CD8-positive, alpha-beta T cell (primary cell): ENCODE measurements at regions of chr20 and their contacts with region 1.

Region 1: GRCh38 chr20:41095110-41095969 is 42.0 kb upstream of the PLCG1 start:
- DNase-seq: peak; percentile 13 to 78 (median 59)
- ATAC-seq: peak; percentile 84
- H3K4me3 ChIP-seq: no peak overlapping the region
- H3K4me3 Mint-ChIP-seq: no peak overlapping the region
- H3K27ac ChIP-seq: no peak overlapping the region
- H3K27ac Mint-ChIP-seq: no peak overlapping the region
- H3K4me1 ChIP-seq: peaks cover 2% of the 10 kb centered on the region
- H3K4me1 Mint-ChIP-seq: peaks cover 3% of the 10 kb centered on the region
- H3K27me3 ChIP-seq: no peaks in the 10 kb centered on the region
- H3K27me3 Mint-ChIP-seq: no peaks in the 10 kb centered on the region
- CTCF ChIP-seq: peak; percentile 85

Region 2: DNA sequence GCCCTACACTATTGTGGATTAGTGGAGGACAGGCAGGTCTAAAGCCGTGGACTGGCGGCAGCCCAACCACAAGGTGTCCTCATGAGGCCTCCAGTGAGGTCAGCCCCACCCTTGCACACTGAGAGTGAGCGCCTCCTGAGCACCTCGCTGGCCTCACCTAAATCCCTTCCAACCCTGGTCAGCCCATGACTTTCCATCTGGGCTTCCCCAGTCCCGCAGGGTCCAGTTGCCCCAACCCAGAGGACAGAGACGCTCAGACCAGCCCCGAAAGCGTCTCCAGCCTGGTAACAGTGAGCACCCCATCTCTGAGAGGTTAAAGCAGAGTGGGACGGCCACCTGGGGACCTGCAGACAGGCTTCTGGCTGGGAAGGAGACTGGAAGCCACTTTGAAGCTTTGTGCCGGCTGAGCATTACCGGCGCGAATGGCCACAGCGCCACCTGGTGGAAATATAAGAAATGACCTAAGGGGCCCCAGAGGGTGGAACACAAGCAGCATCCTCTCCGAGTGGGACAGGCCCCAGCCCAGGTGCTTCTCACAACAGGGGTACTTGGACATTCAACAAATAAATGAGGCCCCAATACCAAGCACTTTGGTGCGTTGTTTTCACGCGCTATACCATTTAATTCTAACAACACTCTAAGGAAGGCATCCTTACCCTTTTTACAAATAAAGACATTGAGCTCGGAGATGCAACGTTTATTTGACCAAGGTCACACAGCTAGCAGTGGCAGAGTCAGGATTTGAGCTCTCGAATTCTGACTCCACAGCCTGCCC is 132.4 kb before region 1 on chr20:
- CTCF ChIA-PET with region 1: interaction called, 153 read pairs
- POLR2A ChIA-PET with region 1: no interaction called
- intact Hi-C with region 1: loop called (anchors 1 kb)
- DNase-seq: peak; percentile 48 to 86 (median 74)
- ATAC-seq: peak; percentile 86
- H3K4me3 ChIP-seq: no peak overlapping the region
- H3K4me3 Mint-ChIP-seq: no peak overlapping the region
- H3K27ac ChIP-seq: no peak overlapping the region
- H3K27ac Mint-ChIP-seq: no peak overlapping the region
- H3K4me1 ChIP-seq: peaks cover 16% of the 10 kb centered on the region
- H3K4me1 Mint-ChIP-seq: peaks cover 8% of the 10 kb centered on the region
- H3K27me3 ChIP-seq: no peaks in the 10 kb centered on the region
- H3K27me3 Mint-ChIP-seq: no peaks in the 10 kb centered on the region
- CTCF ChIP-seq: peak; percentile 88

Region 3: GRCh38 chr20:40982415-40983145 is 112.8 kb before region 1 on chr20:
- CTCF ChIA-PET with region 1: interaction called, 183 read pairs
- POLR2A ChIA-PET with region 1: no interaction called
- intact Hi-C with region 1: no loop called
- DNase-seq: no peak
- ATAC-seq: no peak
- H3K4me3 ChIP-seq: no peak overlapping the region
- H3K4me3 Mint-ChIP-seq: no peak overlapping the region
- H3K27ac ChIP-seq: no peak overlapping the region
- H3K27ac Mint-ChIP-seq: no peak overlapping the region
- H3K4me1 ChIP-seq: peaks cover 12% of the 10 kb centered on the region
- H3K4me1 Mint-ChIP-seq: peaks cover 12% of the 10 kb centered on the region
- H3K27me3 ChIP-seq: no peaks in the 10 kb centered on the region
- H3K27me3 Mint-ChIP-seq: peaks cover 5% of the 10 kb centered on the region
- CTCF ChIP-seq: no peak

Region 4: DNA sequence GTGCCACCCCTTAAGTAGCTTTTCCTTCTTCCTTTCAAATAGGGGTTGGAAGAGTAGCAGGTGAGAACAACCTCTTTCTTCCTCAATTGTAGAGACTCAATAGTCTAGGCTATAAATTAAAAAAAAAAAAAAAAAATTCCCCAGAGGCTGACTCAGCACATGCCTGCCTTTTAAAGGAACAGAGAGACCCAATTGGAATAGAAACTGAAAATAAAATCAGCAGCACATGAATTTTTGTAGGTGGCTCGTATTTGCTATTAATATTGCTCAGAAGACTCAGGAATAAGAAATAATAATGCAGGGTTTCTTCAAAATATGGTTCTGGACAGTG is 47.4 kb before region 1 on chr20:
- CTCF ChIA-PET with region 1: interaction called, 17 read pairs
- POLR2A ChIA-PET with region 1: no interaction called
- intact Hi-C with region 1: no loop called
- DNase-seq: peak in 2 of 9 experiments; percentile 48 to 69
- ATAC-seq: peak; percentile 63
- H3K4me3 ChIP-seq: peak overlapping the region; percentile 34 to 41
- H3K4me3 Mint-ChIP-seq: peak overlapping the region; percentile 79
- H3K27ac ChIP-seq: peak overlapping the region; percentile 9 to 68
- H3K27ac Mint-ChIP-seq: peak overlapping the region; percentile 81
- H3K4me1 ChIP-seq: peaks cover 77% of the 10 kb centered on the region
- H3K4me1 Mint-ChIP-seq: peaks cover 91% of the 10 kb centered on the region
- H3K27me3 ChIP-seq: no peaks in the 10 kb centered on the region
- H3K27me3 Mint-ChIP-seq: no peaks in the 10 kb centered on the region
- CTCF ChIP-seq: no peak

Region 5: DNA sequence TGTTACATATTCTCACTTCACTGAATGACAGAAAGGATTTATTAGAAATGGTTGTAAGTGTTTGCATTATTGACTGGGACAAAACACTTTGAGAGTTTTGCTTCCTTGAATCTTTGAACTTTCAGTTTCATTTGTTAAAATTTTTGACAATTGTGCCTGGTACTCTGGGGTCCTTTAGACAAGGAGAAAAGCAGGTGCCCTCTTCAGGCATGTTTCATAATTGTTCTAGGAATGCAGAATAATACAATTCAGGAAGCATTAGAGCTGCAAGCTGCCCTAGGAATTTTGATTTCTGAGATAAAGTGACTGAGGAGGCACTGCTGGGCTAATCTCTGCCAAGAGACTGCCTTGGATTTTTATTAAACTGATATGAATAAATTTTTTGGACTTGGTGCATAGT is 17.0 kb before region 1 on chr20:
- CTCF ChIA-PET with region 1: interaction called, 11 read pairs
- POLR2A ChIA-PET with region 1: no interaction called
- intact Hi-C with region 1: no loop called
- DNase-seq: peak in 2 of 9 experiments; percentile 30 to 52
- ATAC-seq: peak; percentile 46
- H3K4me3 ChIP-seq: no peak overlapping the region
- H3K4me3 Mint-ChIP-seq: peak overlapping the region; percentile 43
- H3K27ac ChIP-seq: no peak overlapping the region
- H3K27ac Mint-ChIP-seq: peak overlapping the region; percentile 71
- H3K4me1 ChIP-seq: peaks cover 28% of the 10 kb centered on the region
- H3K4me1 Mint-ChIP-seq: peaks cover 65% of the 10 kb centered on the region
- H3K27me3 ChIP-seq: no peaks in the 10 kb centered on the region
- H3K27me3 Mint-ChIP-seq: no peaks in the 10 kb centered on the region
- CTCF ChIP-seq: no peak